K562 (cell line): ENCODE measurements at regions of chr10 and their contacts with region 1.

Region 1: GRCh38 chr10:101830322-101831168 is 12.3 kb upstream of the OGA start:
- DNase-seq: peak; percentile 84 to 92 (median 89)
- ATAC-seq: peak; percentile 90
- H3K4me3 ChIP-seq: peak overlapping the region; percentile 38
- H3K27ac ChIP-seq: peak overlapping the region; percentile 67
- H3K4me1 ChIP-seq: peaks cover 46 to 47% of the 10 kb centered on the region in 2 experiments
- H3K27me3 ChIP-seq: no peaks in the 10 kb centered on the region
- CTCF ChIP-seq: no peak
- EP300 ChIP-seq: no peak
- POLR2A ChIP-seq: no peak; the same call in 1 of the 2 replicates
- RAD21 ChIP-seq: no peak

Region 2: DNA sequence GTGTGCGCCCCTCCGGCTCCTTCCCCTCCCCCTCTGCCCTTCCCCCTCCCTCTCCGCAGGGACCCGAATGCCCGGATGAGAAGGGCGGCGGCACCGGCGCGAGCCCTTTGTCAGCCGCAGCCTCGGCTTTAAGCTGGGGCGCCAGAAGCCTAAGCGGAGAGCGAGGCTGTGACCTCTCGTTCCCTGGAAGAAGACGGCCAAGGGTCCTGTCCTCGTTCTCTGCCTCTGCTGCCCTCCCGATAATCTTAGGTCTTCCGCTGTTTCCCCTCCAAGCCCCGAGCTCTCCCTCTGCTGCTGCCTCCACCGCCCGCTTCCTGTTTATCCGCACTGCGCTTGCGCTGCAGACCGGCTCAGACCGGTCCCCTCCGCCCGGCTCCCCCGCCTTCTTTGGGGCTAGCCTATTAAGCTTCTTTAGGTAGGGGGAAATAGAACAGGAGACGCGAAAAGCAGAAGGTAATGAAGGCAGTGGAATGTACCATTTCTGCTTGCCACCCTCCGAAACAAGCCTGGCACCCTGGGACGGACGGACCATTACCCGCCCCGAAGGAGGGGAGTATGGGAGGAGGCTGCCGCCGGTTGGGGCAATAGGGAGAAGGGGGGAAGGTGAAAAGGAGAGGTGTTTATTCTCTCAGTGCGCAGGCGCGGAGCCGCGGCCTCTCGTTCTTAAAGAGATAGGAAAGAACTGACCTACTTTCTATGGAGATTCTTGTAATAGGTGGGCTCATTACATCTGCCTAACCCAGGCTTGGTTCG is 12.2 kb before region 1 on chr10 and contains the start of gene OGA:
- CTCF ChIA-PET with region 1: no interaction called
- POLR2A ChIA-PET with region 1: interaction called, 19 read pairs
- in situ Hi-C with region 1: no loop called
- intact Hi-C with region 1: no loop called
- DNase-seq: peak; percentile 85 to 96 (median 89)
- ATAC-seq: peak; percentile 86
- H3K4me3 ChIP-seq: peak within 1 kb of the TSS; percentile 98
- H3K27ac ChIP-seq: peak within 1 kb of the TSS; percentile 99
- H3K4me1 ChIP-seq: peaks cover 12 to 16% of the 10 kb centered on the region in 2 experiments; a peak in 4 of 5 replicates
- H3K27me3 ChIP-seq: no peaks in the 10 kb centered on the region
- CTCF ChIP-seq: no peak
- EP300 ChIP-seq: peak; percentile 33; the same call in 1 of the 2 replicates
- POLR2A ChIP-seq: peak; percentile 96
- RAD21 ChIP-seq: no peak
- polyA plus RNA-seq, gene OGA: 13.5 to 18.6 TPM

Region 3: GRCh38 chr10:102072673-102073527 is 242.4 kb after region 1 on chr10:
- CTCF ChIA-PET with region 1: interaction called, 17 read pairs
- POLR2A ChIA-PET with region 1: no interaction called
- in situ Hi-C with region 1: no loop called
- intact Hi-C with region 1: no loop called
- DNase-seq: peak; percentile 67 to 79 (median 69)
- ATAC-seq: peak; percentile 93
- H3K4me3 ChIP-seq: no peak overlapping the region
- H3K27ac ChIP-seq: no peak overlapping the region
- H3K4me1 ChIP-seq: peaks cover 3 to 11% of the 10 kb centered on the region in 2 experiments; a peak in 3 of 5 replicates
- H3K27me3 ChIP-seq: no peaks in the 10 kb centered on the region
- CTCF ChIP-seq: peak; percentile 82 to 91 (median 86)
- EP300 ChIP-seq: no peak
- POLR2A ChIP-seq: no peak
- RAD21 ChIP-seq: peak; percentile 89 to 94